Psoas muscle (tissue), 8 donors: ENCODE measurements at regions of chr3 and their contacts with region 1.

Region 1: DNA sequence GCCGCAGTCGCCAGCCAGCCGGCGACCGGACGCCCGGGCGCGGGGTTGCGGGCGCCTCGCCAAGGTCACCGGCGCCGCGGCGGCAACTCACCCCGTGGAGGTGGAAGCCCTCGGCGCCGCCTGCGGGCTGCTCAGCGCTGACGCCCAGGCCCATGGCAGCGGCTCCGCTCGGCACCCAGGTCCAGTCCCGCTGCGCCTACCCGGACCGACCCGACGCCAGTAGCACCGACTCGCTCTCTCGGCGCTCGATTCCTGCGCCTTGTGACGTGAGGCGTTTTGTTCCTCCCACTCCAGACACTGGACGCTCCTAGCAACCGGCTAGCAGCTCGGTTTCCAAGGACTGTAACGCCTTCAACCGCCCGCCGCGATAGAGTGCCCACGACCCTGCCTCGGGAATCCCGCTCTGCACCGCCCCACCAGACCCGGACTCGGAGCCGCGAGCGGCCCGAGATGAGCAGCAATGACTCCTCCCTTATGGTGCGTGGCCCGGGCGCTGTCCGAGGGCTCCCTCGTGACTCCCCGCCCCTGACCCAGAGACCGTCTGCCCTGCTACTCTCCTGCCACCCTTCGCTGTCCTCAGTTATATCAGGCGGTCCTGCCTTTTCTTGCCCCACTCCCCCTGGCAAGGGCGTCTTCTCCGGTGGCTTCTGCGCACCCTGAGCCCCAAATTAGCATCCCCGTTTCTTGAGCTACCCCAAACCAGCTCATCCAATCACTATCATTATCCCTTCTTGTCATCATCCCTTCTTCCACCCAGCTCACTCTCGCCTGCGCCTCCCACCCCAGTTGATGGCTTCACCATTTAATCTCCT is at the starts of genes GORASP1 and TTC21A:
- DNase-seq: peak; percentile 91 to 95
- ATAC-seq: peak; percentile 85 to 93 (median 89)
- H3K4me3 ChIP-seq: peak within 1 kb of the TSS; percentile 95
- H3K27ac ChIP-seq: peak within 1 kb of the TSS; percentile 100
- H3K4me1 ChIP-seq: peaks cover 34% of the 10 kb centered on the region
- H3K27me3 ChIP-seq: no peaks in the 10 kb centered on the region
- CTCF ChIP-seq: no peak
- total RNA-seq, gene GORASP1: 34.3 to 46.7 (median 42.6) TPM
- total RNA-seq, gene TTC21A: 0.52 to 1.2 (median 0.78) TPM

Region 2: DNA sequence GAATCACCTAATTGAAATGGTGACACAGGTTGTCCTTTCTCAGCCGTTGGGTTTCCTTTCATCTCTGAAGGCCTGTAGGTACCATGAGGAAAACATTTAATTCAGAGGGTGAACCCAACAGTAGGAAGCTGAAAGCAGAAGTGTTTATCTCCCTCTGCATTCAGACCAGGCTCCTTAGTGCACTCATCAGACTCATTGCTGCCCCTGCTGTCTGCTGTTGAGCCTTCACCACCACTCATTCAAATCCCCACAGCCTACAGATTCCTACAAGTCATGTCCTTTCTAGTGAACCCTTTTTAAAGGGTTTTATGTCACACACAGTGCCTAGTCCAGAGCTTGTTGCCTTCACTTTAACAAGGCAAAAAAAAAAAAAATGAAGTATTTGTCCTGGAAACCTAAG is 42.4 kb before region 1 on chr3:
- intact Hi-C with region 1: no loop called
- DNase-seq: no peak
- ATAC-seq: no peak
- H3K4me3 ChIP-seq: no peak overlapping the region
- H3K27ac ChIP-seq: no peak overlapping the region
- H3K4me1 ChIP-seq: no peaks in the 10 kb centered on the region
- H3K27me3 ChIP-seq: no peaks in the 10 kb centered on the region
- CTCF ChIP-seq: no peak

Region 3: DNA sequence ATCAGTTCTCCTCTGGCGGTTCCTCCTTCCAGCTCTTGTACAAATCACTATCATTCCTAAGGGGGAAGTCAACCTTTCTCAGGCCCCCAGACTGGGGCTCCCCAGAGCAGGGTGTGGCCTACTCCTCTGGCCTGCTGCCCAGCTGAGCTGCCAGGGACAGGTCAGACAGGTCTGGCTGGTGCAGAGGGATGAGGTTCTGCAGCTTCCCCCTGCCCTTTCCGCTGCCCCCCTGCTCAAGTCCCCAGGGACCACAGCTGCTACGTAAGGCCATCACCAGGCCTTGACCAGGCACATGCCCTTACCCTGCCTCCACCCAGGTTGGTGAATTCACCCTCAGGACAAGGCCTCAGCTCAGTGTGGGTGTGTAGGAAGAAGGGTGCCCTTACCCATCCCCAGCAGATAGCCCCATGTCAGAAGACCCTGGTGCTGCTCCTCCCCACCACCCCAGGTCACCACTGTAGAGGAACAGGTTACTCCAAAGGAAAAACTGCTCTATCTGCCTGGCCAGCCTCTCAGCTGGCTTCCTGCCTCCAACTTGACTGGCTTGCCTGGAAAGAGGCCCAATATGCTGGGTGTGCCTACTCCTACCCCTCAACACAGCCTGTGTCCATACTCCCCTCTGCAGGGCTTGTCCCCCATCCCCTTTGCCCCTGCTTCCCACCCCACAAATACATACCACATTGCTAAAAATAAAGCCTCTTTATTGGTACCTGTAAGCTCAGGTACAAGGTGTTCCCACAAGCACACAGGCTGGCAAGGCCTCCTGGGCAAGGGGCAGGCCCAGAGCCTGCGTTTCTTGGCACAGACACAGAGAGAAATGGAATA is 33.8 kb after region 1 on chr3:
- intact Hi-C with region 1: loop called (anchors 5 kb)
- DNase-seq: peak; percentile 59 to 66
- ATAC-seq: peak in 2 of 4 donors; percentile 18 to 24
- H3K4me3 ChIP-seq: peak overlapping the region; percentile 6
- H3K27ac ChIP-seq: peak overlapping the region; percentile 77
- H3K4me1 ChIP-seq: peaks cover 37% of the 10 kb centered on the region
- H3K27me3 ChIP-seq: no peaks in the 10 kb centered on the region
- CTCF ChIP-seq: no peak

Region 4: DNA sequence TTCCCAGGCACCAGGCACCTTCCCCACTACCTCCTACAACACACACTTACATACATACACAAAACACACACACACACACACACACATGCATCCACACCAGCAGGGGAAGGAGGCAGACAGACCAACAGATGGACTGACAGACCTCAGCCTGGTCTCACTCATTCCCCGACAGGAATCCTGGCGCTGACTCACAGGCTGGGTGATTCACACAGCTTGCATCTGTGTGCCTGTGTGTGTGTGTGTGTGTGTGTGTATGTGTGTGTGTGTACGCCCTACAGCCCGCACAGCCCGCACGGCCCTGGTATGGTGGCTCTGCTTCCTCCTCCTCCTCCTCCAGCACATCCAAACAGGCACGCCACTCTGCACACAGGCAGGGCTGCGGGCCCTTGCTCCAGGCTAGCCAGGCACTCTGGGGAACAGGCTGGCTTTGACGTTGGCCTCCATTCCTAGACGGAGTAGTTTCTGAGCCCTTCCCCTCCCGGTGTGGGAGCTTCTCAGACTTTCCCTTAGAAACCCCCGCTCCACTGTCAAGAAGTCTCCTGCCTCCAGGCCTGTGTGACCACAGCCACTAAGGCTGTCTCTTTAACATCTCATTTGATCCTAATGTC is 39.5 kb after region 1 on chr3:
- intact Hi-C with region 1: loop called (anchors 5 kb)
- DNase-seq: peak; percentile 91 to 93
- ATAC-seq: peak; percentile 64 to 77 (median 74)
- H3K4me3 ChIP-seq: peak overlapping the region; percentile 93
- H3K27ac ChIP-seq: peak overlapping the region; percentile 99
- H3K4me1 ChIP-seq: peaks cover 72% of the 10 kb centered on the region
- H3K27me3 ChIP-seq: no peaks in the 10 kb centered on the region
- CTCF ChIP-seq: no peak

Region 5: DNA sequence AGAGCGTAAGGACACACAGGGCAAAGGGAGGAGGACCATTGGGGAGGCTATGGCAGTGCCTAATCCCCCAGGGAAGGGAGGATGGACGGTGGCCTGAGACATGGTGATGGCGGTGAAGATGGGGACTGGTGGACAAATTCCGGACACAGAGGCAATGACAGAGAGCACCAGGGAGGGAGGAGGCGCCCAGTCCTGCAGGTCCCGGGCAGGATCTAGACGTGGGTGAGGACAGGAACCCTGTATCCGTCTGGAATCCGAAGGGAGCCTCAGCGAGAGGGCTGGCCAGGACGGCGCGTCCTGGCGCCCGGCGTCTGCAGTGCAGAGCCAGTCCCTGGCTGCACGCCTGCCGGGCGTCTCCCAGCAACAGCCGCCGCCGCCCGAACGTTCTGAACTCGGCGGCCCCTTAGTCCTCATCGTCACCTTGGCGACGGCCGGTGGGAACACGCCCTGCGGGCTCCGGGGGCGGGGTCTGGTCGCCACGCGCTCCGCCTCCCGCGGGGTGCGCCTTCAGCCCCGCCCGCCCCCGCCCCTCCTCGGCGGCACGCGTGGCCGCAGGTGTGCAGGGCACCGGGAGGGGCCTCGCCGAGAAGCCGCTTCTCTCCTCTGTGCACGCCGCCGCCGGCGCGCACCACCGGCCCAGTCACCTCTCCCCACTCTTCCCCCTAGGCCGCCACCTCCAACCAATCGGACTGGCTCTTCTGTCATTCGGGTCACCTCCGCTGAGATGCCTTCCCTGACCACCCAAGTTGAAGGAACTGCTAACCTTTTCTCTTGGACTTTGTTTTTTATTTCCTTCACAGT is 73.2 kb after region 1 on chr3:
- intact Hi-C with region 1: loop called (anchors 5 kb)
- DNase-seq: peak; percentile 95 to 97
- ATAC-seq: peak; percentile 76 to 83 (median 82)
- H3K4me3 ChIP-seq: peak overlapping the region; percentile 54
- H3K27ac ChIP-seq: peak overlapping the region; percentile 83
- H3K4me1 ChIP-seq: peaks cover 18% of the 10 kb centered on the region
- H3K27me3 ChIP-seq: no peaks in the 10 kb centered on the region
- CTCF ChIP-seq: peak; percentile 33

Region 6: GRCh38 chr3:39288300-39288808 is 180.8 kb after region 1 on chr3:
- intact Hi-C with region 1: loop called (anchors 2 to 5 kb)
- DNase-seq: peak; percentile 72 to 86
- ATAC-seq: peak; percentile 89 to 93 (median 92)
- H3K4me3 ChIP-seq: no peak overlapping the region
- H3K27ac ChIP-seq: peak overlapping the region; percentile 83
- H3K4me1 ChIP-seq: peaks cover 15% of the 10 kb centered on the region
- H3K27me3 ChIP-seq: no peaks in the 10 kb centered on the region
- CTCF ChIP-seq: peak; percentile 93

Region 7: GRCh38 chr3:39383045-39383880 is 275.7 kb after region 1 on chr3 and contains the start of gene SLC25A38:
- intact Hi-C with region 1: loop called in 1 of 2 experiments (anchors 10 kb)
- DNase-seq: peak; percentile 75 to 85
- ATAC-seq: peak; percentile 78 to 83 (median 80)
- H3K4me3 ChIP-seq: peak within 1 kb of the TSS; percentile 84
- H3K27ac ChIP-seq: peak within 1 kb of the TSS; percentile 93
- H3K4me1 ChIP-seq: peaks cover 23% of the 10 kb centered on the region
- H3K27me3 ChIP-seq: no peaks in the 10 kb centered on the region
- CTCF ChIP-seq: peak; percentile 30
- total RNA-seq, gene SLC25A38: 24.9 to 34.8 (median 30.4) TPM

Region 8: DNA sequence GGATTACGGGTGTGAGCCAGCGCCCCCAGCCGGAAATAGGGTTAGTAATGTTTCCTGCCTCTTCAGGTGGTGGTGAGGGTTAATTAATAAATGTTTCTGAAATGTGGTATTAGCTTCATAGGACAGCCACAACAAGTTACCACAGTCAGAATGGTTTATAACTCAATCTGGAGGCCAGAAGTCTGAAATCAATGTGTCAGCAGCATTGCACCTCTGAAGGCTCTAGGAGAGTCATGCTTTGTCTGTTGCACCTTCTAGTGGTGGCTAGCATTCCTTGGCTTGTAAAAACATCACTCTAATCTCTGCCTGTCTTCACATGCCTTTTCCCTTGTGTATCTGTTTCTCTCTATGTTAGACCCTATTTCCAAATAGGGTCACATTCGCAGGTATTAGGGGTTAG is 291.1 kb after region 1 on chr3:
- intact Hi-C with region 1: loop called in 1 of 2 experiments (anchors 10 kb)
- DNase-seq: no peak
- ATAC-seq: no peak
- H3K4me3 ChIP-seq: no peak overlapping the region
- H3K27ac ChIP-seq: no peak overlapping the region
- H3K4me1 ChIP-seq: no peaks in the 10 kb centered on the region
- H3K27me3 ChIP-seq: no peaks in the 10 kb centered on the region
- CTCF ChIP-seq: no peak